IMR-90 (cell line): ENCODE measurements at regions of chr4 and their contacts with region 1.

Region 1: GRCh38 chr4:145609481-145610427 is 9.4 kb upstream of the MMAA start:
- DNase-seq: peak; percentile 77
- ATAC-seq: peak; percentile 85
- H3K4me3 ChIP-seq: no peak overlapping the region
- H3K27ac ChIP-seq: no peak overlapping the region
- H3K4me1 ChIP-seq: no peaks in the 10 kb centered on the region
- H3K27me3 ChIP-seq: 0 out of 2 replicates have a peak, but pooled peaks cover 2% of the 10 kb centered on the region
- CTCF ChIP-seq: peak; percentile 84
- POLR2A ChIP-seq: no peak
- RAD21 ChIP-seq: peak; percentile 83

Region 2: DNA sequence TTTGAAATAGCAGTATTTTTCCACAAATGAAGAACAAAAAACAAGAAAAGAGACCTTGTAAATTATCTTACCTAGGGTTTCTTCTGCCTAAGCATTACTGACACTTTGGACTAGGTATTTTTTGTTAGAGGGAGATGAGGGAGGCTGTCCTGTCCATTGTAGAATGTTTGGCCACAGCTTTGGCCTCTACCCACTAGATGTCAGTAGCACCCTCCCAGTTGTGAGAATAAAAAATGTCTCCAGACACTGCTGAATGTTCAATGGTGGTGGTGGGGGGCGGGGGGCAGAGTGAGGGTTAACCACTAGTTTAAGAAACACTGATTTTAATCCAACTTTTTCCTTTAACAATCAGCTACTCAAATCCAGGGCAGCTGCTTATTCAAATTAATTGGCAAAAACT is 455.2 kb before region 1 on chr4:
- CTCF ChIA-PET with region 1: interaction called, 3 read pairs
- POLR2A ChIA-PET with region 1: no interaction called
- dilution Hi-C with region 1: no loop called
- in situ Hi-C with region 1: no loop called
- intact Hi-C with region 1: loop called (anchors 1 kb)
- DNase-seq: peak; percentile 35
- ATAC-seq: peak; percentile 77
- H3K4me3 ChIP-seq: no peak overlapping the region
- H3K27ac ChIP-seq: no peak overlapping the region
- H3K4me1 ChIP-seq: no peaks in the 10 kb centered on the region
- H3K27me3 ChIP-seq: no peaks in the 10 kb centered on the region
- CTCF ChIP-seq: peak; percentile 50
- POLR2A ChIP-seq: no peak
- RAD21 ChIP-seq: peak; percentile 60

Region 3: GRCh38 chr4:145216535-145216934 is 393.2 kb before region 1 on chr4:
- CTCF ChIA-PET with region 1: interaction called, 9 read pairs
- POLR2A ChIA-PET with region 1: no interaction called
- dilution Hi-C with region 1: no loop called
- in situ Hi-C with region 1: loop called (anchors 25 kb)
- intact Hi-C with region 1: loop called (anchors 1 kb)
- DNase-seq: peak; percentile 44
- ATAC-seq: no peak
- H3K4me3 ChIP-seq: no peak overlapping the region
- H3K27ac ChIP-seq: no peak overlapping the region
- H3K4me1 ChIP-seq: no peaks in the 10 kb centered on the region
- H3K27me3 ChIP-seq: peaks cover 3% of the 10 kb centered on the region; the same call in 1 of the 2 replicates
- CTCF ChIP-seq: peak; percentile 79
- POLR2A ChIP-seq: no peak
- RAD21 ChIP-seq: peak; percentile 84

Region 4: GRCh38 chr4:145260091-145260490 is 349.7 kb before region 1 on chr4:
- CTCF ChIA-PET with region 1: no interaction called
- POLR2A ChIA-PET with region 1: no interaction called
- dilution Hi-C with region 1: no loop called
- in situ Hi-C with region 1: no loop called
- intact Hi-C with region 1: no loop called
- DNase-seq: no peak
- ATAC-seq: no peak
- H3K4me3 ChIP-seq: no peak overlapping the region
- H3K27ac ChIP-seq: no peak overlapping the region
- H3K4me1 ChIP-seq: no peaks in the 10 kb centered on the region
- H3K27me3 ChIP-seq: peaks cover 3% of the 10 kb centered on the region
- CTCF ChIP-seq: no peak
- POLR2A ChIP-seq: no peak
- RAD21 ChIP-seq: no peak

Region 5: DNA sequence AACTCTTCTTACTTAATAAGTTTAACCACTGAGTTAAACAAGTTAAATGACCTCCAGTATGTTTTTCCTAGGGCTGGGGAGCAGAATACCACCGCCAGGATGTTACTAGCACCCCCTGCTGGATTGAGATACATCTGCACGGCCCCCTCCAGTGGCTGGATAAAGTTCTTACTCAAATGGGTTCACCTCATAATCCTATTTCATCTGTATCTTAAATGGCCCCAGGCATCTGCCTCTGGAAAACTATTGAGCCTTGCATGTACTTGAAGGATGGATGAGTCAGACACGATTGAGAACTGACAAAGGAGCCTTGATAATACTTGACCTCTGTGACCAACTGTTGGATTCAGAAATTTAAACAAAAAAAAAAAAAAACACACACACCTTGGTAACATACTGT is 52.0 kb before region 1 on chr4:
- CTCF ChIA-PET with region 1: no interaction called
- POLR2A ChIA-PET with region 1: no interaction called
- dilution Hi-C with region 1: no loop called
- in situ Hi-C with region 1: no loop called
- intact Hi-C with region 1: loop called (anchors 1 kb)
- DNase-seq: peak; percentile 72
- ATAC-seq: peak; percentile 99
- H3K4me3 ChIP-seq: no peak overlapping the region
- H3K27ac ChIP-seq: no peak overlapping the region
- H3K4me1 ChIP-seq: no peaks in the 10 kb centered on the region
- H3K27me3 ChIP-seq: no peaks in the 10 kb centered on the region
- CTCF ChIP-seq: peak; percentile 99
- POLR2A ChIP-seq: no peak
- RAD21 ChIP-seq: peak; percentile 81

Region 6: DNA sequence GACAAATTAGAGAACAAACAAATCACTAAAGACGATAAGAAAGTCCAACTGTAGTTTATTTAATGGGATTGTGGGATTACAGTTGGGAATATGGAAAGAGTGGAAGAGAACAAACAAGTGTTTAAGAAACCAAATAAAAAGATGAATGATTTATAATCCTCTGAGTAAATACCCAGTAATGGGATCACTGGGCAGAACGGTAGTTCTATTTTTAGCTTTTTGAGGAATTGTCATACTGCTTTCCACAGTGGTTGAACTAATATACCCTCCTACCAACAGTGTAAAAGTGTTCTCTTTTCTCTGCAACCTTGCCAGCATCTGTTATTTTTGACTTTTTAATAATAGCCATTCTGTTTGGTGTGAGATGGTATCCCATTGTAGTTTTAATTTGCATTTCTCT is 85.2 kb after region 1 on chr4:
- CTCF ChIA-PET with region 1: no interaction called
- POLR2A ChIA-PET with region 1: no interaction called
- dilution Hi-C with region 1: no loop called
- in situ Hi-C with region 1: no loop called
- intact Hi-C with region 1: no loop called
- DNase-seq: peak; percentile 6
- ATAC-seq: no peak
- H3K4me3 ChIP-seq: no peak overlapping the region
- H3K27ac ChIP-seq: no peak overlapping the region
- H3K4me1 ChIP-seq: no peaks in the 10 kb centered on the region
- H3K27me3 ChIP-seq: no peaks in the 10 kb centered on the region
- CTCF ChIP-seq: no peak
- POLR2A ChIP-seq: no peak
- RAD21 ChIP-seq: no peak

Region 7: GRCh38 chr4:145731028-145731427 is 121.3 kb after region 1 on chr4:
- CTCF ChIA-PET with region 1: no interaction called
- POLR2A ChIA-PET with region 1: no interaction called
- dilution Hi-C with region 1: no loop called
- in situ Hi-C with region 1: no loop called
- intact Hi-C with region 1: no loop called
- DNase-seq: peak; percentile 90
- ATAC-seq: no peak
- H3K4me3 ChIP-seq: no peak overlapping the region
- H3K27ac ChIP-seq: no peak overlapping the region
- H3K4me1 ChIP-seq: peaks cover 21% of the 10 kb centered on the region
- H3K27me3 ChIP-seq: no peaks in the 10 kb centered on the region
- CTCF ChIP-seq: no peak
- POLR2A ChIP-seq: no peak
- RAD21 ChIP-seq: no peak